Activated B cell treated with CpG ODN at 0.5 μM for 24 hours (primary cell): ENCODE measurements at regions of chr2 and their contacts with region 1.

Region 1: DNA sequence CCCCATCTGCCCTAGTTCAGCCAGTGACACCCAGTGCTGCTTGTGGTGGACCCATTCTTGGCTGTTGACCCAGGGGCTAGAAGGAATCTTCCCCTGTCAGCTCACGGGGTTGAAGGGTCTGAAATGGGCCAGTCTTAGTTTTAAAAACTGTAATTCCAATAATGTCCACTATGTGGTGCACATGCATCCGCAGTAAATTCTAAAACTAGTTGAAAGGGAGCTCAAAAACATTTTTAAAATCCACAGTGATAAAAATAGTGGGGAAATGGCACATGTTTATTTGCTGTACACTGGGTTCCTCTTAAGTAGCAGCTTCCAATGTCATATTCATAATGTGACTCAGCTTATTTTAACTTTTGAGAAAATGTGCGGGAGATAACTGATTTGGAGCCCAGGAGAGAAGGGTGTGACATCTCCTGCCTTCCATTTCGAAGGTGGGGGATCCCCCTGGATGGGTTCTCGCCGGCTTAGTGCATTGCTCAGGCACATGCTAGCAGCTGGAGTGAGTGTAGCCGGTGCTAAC is 32.8 kb downstream of the GRHL1 start:
- DNase-seq: no peak
- ATAC-seq: peak; percentile 86
- H3K4me3 Mint-ChIP-seq: no peak overlapping the region
- H3K27ac Mint-ChIP-seq: no peak overlapping the region
- H3K4me1 Mint-ChIP-seq: peaks cover 6% of the 10 kb centered on the region
- H3K27me3 Mint-ChIP-seq: peaks cover 16% of the 10 kb centered on the region
- CTCF ChIP-seq: no peak

Region 2: DNA sequence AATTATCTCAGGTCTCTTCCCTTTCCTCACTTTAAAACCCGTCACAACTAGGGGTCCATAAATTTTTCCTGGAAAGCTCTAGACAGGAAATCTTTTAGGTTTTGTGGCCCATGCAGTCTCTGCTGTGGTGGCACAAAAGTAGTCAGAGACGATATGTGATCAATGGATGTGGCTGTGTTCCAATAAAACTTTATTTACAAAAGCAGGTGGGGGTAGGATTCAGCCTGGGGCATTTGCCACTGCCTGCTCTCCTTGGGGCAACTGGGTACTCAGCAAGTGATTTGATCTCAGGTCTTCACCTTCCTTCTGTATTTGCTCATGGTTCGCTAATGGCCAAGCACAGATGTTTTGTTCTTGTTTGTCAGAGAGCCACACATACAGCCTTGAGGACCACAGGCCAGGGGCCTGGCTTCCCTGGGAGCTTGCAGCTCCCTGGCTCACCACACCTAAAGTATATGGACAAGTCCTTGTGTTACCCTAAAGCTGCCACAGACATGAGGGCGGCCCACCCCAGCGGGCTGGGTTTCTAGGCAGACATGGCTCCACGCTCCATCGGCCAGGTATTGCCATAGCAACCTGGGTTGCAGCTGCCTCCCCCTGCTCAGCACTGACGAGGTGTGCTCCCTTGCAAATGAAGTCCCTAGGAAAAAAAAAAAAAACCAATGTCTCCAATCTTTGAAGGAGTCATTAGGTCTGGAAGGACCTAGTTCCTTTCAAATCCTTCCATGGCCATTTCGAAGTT is 263.8 kb before region 1 on chr2:
- CTCF ChIA-PET with region 1: no interaction called
- POLR2A ChIA-PET with region 1: no interaction called
- intact Hi-C with region 1: no loop called
- DNase-seq: no peak
- ATAC-seq: peak; percentile 47
- H3K4me3 Mint-ChIP-seq: no peak overlapping the region
- H3K27ac Mint-ChIP-seq: no peak overlapping the region
- H3K4me1 Mint-ChIP-seq: peaks cover 10% of the 10 kb centered on the region
- H3K27me3 Mint-ChIP-seq: no peaks in the 10 kb centered on the region
- CTCF ChIP-seq: no peak

Region 3: DNA sequence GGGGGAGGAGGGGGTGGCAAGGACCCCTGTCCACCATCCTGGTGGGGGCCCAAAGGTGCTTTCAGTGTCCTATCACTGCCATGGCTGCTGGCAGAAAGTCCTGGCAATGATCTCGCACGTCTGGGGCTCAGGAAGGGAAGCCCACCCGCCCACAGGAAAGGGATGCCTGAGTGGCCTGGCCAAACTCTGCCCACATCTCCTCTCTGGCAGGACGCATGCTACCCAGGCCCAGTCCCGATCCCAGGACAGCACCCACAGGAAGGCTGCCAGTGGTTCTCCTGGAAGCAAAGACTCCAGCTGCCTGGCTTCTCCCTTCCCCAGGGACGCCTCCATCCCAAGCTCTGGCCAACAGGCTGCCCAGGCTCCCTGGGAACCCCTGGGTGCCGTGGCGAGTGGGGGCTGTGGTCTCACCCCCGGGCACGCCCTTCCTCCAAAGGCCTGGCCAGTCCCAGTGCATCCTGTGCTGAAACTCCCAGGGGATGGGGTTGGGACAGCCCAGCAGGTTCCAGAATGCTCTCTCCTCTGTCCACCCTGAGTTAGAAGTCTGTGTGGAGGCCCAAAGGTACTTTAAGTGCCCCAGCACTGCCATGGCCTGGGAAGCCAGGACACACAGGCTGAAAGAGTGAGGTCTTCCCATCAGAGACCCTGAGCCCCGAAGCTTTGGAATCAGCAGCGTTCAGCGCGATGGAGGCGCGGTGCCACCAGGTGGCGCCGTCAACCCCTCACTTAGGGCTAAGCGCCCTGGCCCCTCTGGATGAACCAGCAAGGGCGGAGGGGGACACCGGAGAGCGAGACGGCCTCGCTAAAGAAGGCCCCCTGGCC is 170.8 kb before region 1 on chr2:
- CTCF ChIA-PET with region 1: interaction called, 6 read pairs
- POLR2A ChIA-PET with region 1: interaction called, 4 read pairs
- intact Hi-C with region 1: loop called (anchors 1 kb)
- DNase-seq: peak; percentile 59
- ATAC-seq: peak; percentile 89
- H3K4me3 Mint-ChIP-seq: no peak overlapping the region
- H3K27ac Mint-ChIP-seq: no peak overlapping the region
- H3K4me1 Mint-ChIP-seq: peaks cover 9% of the 10 kb centered on the region
- H3K27me3 Mint-ChIP-seq: peaks cover 4% of the 10 kb centered on the region
- CTCF ChIP-seq: peak; percentile 95

Region 4: DNA sequence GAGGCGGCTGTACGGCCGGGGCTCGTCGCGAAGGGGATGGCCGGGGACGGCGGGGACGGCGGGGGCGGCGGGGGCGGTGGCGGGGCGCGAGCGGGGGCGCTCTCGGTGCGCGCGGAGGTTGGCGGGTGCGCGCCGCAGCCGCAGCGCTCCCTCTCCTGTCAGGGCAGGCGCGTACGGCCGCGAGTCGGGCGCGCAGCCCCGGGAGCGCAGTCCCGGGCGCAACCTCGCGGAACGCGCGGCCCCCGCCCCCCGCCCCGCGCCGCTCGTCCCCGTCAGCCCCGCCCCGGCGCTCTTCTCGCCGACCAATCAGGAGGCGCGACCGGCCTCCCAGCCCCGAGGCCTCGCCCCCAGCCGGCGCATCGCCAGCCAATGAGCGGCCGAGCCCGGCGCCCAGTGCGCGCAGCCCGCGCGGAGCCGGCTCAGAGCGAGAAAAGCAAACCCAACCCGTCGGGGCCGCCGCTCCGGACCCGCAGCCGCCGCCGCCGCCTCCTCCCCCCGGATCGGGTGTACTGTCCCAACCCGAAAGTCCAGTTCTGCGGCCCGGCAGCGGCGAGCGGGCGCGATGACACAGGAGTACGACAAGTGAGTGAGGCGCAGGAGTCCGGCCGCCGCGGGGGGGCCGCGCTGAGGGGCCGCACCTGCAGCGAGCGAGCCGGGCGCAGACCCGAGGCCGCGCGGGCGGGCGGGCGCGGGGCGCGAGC is 32.9 kb before region 1 on chr2 and contains the start of gene GRHL1:
- CTCF ChIA-PET with region 1: interaction called, 10 read pairs
- POLR2A ChIA-PET with region 1: no interaction called
- intact Hi-C with region 1: no loop called
- DNase-seq: peak; percentile 89
- ATAC-seq: peak; percentile 96
- H3K4me3 Mint-ChIP-seq: peak within 1 kb of the TSS; percentile 84
- H3K27ac Mint-ChIP-seq: peak within 1 kb of the TSS; percentile 65
- H3K4me1 Mint-ChIP-seq: peaks cover 14% of the 10 kb centered on the region
- H3K27me3 Mint-ChIP-seq: peaks cover 37% of the 10 kb centered on the region
- CTCF ChIP-seq: no peak
- total RNA-seq, gene GRHL1: 0.39 and 0.95 TPM in 2 replicates

Region 5: DNA sequence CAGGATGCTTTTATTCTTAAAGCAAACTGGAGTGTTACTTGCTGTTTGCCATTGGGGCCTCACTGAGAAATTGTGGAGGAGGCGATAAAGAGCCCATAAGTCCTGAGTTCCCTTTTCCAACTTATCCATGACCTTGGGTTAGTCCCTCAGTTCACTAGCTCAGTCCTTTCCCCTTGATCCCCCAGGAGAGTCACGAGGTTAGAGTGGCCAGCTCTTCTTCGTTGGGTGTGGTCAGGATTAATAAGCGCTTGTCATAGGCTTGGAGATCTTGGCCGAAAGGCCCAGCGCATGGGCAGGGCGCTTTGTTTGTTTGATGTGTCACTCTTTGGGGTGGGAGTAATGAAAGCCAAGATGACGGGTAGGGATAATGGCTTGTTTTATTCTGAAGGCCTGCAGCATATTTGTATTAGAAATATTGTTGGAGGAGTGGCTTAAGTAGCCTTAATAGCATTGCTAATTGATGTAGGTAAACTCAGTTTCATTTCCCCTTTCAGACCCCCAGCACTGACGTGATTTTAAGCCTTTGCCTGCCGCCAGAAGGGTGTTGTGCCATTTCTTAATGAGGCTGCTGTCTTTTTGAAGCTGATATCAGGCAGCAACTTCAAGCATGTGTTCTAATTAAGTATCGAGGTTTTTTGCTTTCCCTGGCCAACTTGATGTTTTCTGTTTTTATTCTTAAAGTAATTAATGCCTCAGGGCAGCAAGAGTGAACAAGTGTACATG is 17.1 kb before region 1 on chr2:
- CTCF ChIA-PET with region 1: interaction called, 16 read pairs
- POLR2A ChIA-PET with region 1: no interaction called
- intact Hi-C with region 1: no loop called
- DNase-seq: no peak
- ATAC-seq: peak; percentile 95
- H3K4me3 Mint-ChIP-seq: no peak overlapping the region
- H3K27ac Mint-ChIP-seq: no peak overlapping the region
- H3K4me1 Mint-ChIP-seq: peaks cover 18% of the 10 kb centered on the region
- H3K27me3 Mint-ChIP-seq: peaks cover 2% of the 10 kb centered on the region
- CTCF ChIP-seq: no peak

Region 6: DNA sequence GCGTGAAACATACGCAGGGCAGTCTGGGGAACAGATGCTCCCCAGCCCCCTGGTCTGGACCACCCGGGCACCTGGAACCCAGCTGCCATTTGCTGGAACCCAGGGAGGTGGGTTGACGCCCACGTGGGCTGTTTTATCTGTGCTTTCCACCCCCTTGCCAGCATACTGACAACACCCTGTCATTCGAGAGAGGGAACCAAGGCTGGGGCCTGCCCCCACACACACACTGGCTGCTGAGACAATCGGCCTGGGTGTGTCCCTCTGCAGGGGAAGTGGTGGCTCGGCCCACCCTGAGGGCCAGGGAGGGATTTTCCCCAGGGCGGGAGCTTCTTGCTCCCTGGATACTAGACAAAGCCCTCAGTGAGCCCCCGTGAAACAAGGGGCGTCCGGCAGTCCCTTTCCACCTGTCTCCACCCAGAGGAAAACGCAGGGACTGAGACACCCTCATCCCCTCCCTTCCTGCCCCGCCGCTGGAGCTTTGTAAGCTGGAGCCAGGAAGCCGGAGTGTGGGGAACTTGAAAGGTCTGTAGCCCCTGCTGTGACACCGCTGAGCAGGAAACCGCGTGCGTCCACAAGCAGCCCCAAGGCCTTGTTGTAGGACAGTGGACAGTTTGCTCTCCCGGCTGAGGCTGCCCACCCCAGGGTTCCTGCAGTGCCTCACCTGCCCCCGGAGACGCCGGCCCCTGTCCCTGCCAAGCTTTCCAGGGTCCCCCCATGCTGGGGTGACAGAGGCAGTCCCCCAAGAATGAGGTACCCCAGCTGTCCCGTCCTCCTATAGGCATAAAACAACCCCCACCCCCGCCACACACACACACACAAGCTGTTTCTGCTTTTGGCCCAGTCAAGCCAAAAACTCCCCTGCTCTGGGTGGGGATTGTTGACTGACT is 45.0 kb after region 1 on chr2:
- CTCF ChIA-PET with region 1: interaction called, 18 read pairs
- POLR2A ChIA-PET with region 1: interaction called, 11 read pairs
- intact Hi-C with region 1: loop called (anchors 1 kb)
- DNase-seq: peak; percentile 49
- ATAC-seq: peak; percentile 99
- H3K4me3 Mint-ChIP-seq: peak overlapping the region; percentile 82
- H3K27ac Mint-ChIP-seq: peak overlapping the region; percentile 86
- H3K4me1 Mint-ChIP-seq: peaks cover 47% of the 10 kb centered on the region
- H3K27me3 Mint-ChIP-seq: no peaks in the 10 kb centered on the region
- CTCF ChIP-seq: no peak

Region 7: GRCh38 chr2:10057231-10058107 is 73.2 kb after region 1 on chr2:
- CTCF ChIA-PET with region 1: interaction called, 208 read pairs
- POLR2A ChIA-PET with region 1: no interaction called
- intact Hi-C with region 1: no loop called
- DNase-seq: no peak
- ATAC-seq: no peak
- H3K4me3 Mint-ChIP-seq: no peak overlapping the region
- H3K27ac Mint-ChIP-seq: no peak overlapping the region
- H3K4me1 Mint-ChIP-seq: peaks cover 4% of the 10 kb centered on the region
- H3K27me3 Mint-ChIP-seq: peaks cover 3% of the 10 kb centered on the region
- CTCF ChIP-seq: no peak

Region 8: DNA sequence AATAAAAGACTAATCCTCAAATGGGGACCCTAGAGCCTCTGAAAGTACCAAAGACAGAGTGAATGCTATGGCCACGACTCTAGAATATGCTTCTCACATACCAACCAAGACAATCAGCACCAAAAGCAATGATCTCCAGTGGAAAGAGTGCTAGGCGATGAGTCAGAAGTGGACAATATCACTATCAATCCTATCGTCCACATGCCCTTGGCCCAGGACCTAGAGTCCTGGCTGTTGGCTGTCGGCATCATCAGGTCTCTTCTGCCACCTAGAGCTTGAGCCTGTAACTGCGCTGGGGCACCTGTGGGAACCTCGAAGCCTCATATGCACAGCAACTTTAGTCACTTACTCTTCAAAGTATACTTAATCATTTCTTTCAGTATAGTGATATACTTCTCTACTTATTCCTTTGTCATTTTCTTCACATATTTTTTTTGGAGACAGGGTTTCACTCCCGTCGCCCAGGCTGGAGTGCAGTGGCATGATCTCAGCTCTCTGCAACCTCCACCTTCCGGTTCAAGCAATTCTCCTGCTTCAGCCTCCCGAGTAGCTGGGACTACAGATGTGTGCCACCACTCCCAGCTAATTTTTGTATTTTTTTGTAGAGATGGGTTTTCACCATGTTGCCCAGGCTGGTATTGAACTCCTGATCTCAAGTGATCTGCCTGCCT is 675.8 kb after region 1 on chr2:
- CTCF ChIA-PET with region 1: no interaction called
- POLR2A ChIA-PET with region 1: no interaction called
- intact Hi-C with region 1: loop called (anchors 10 kb)
- DNase-seq: no peak
- ATAC-seq: no peak
- H3K4me3 Mint-ChIP-seq: no peak overlapping the region
- H3K27ac Mint-ChIP-seq: no peak overlapping the region
- H3K4me1 Mint-ChIP-seq: no peaks in the 10 kb centered on the region
- H3K27me3 Mint-ChIP-seq: no peaks in the 10 kb centered on the region
- CTCF ChIP-seq: no peak